ENCODE measurements at regions of chr10 and their contacts with region 1.

Region 1: GRCh38 chr10:70221030-70221429 is 12.2 kb downstream of the PPA1 start:
- DNase-seq: no peak
- H3K4me3 ChIP-seq: no peak overlapping the region
- H3K27ac ChIP-seq: no peak overlapping the region
- H3K4me1 ChIP-seq: no peaks in the 10 kb centered on the region
- H3K27me3 ChIP-seq: no peaks in the 10 kb centered on the region
- CTCF ChIP-seq: no peak
- POLR2A ChIP-seq: no peak

Region 2: GRCh38 chr10:70363971-70364771 is 143.1 kb after region 1 on chr10:
- intact Hi-C with region 1: loop called (anchors 1 kb)
- DNase-seq: peak; percentile 90
- H3K4me3 ChIP-seq: no peak overlapping the region
- H3K27ac ChIP-seq: peak overlapping the region; percentile 50 to 62
- H3K4me1 ChIP-seq: no peaks in the 10 kb centered on the region
- H3K27me3 ChIP-seq: no peaks in the 10 kb centered on the region
- CTCF ChIP-seq: peak; percentile 72 to 98 (median 90)
- POLR2A ChIP-seq: no peak